HCT116 (cell line): ENCODE measurements at regions of chr7 and their contacts with region 1.

Region 1: GRCh38 chr7:142782922-142783900 is 12.4 kb downstream of the PRSS2 start:
- DNase-seq: peak; percentile 89
- ATAC-seq: peak; percentile 91
- H3K4me3 ChIP-seq: peak overlapping the region; percentile 38 to 51
- H3K27ac ChIP-seq: no peak overlapping the region
- H3K4me1 ChIP-seq: peaks cover 0 to 5% of the 10 kb centered on the region in 2 experiments; a peak in 1 of 4 replicates
- H3K27me3 ChIP-seq: no peaks in the 10 kb centered on the region
- CTCF ChIP-seq: peak; percentile 88 to 100 (median 92)
- POLR2A ChIP-seq: no peak
- RAD21 ChIP-seq: peak; percentile 99

Region 2: GRCh38 chr7:142516038-142516501 is 267.1 kb before region 1 on chr7:
- CTCF ChIA-PET with region 1: interaction called, 10 read pairs
- POLR2A ChIA-PET with region 1: no interaction called
- RAD21 ChIA-PET with region 1: no interaction called
- intact Hi-C with region 1: loop called (anchors 5 kb)
- DNase-seq: peak; percentile 61
- ATAC-seq: peak; percentile 97
- H3K4me3 ChIP-seq: no peak overlapping the region
- H3K27ac ChIP-seq: no peak overlapping the region
- H3K4me1 ChIP-seq: peaks cover 0 to 19% of the 10 kb centered on the region in 2 experiments; a peak in 2 of 4 replicates
- H3K27me3 ChIP-seq: no peaks in the 10 kb centered on the region
- CTCF ChIP-seq: peak; percentile 77 to 89 (median 88)
- POLR2A ChIP-seq: no peak
- RAD21 ChIP-seq: peak; percentile 81

Region 3: DNA sequence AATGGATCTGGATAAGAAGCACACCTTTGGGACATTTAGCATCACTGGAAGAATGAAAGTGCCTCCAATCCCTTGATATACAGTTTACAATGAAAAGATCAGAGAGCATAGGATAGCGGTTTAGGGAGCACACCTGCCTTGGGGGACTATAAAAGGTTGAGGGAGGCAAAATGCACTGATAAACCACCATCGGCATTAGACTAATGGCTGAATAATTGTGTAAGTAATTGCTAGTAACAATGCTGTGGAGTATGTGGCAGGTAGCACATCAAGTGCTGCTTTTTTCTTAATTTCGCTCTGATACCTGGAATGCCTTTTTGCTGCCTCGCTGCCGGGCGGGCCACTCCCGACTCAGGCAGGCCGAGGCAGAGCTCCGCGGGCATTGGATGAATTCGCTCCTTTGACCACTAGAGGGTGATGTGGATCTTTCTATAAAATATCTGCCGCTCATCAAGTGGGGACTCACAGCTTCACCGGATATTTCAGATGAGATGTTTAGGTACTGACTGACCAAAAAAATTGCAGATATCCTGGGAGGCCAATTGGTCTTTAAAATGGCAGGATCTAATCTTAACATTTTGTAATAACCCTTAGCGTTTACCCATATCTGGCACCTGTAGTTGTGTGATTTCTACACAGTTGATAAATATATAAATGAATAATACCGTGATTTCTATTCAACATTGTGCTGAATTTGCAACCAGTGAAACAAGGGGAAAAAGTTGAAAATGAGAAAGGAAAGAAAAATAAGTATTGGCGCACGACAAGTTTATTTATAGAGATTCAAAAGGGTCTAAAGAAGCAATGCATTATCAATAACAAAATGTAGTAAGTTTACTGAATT is 150.7 kb before region 1 on chr7:
- CTCF ChIA-PET with region 1: interaction called, 166 read pairs
- POLR2A ChIA-PET with region 1: interaction called, 3 read pairs
- RAD21 ChIA-PET with region 1: interaction called, 13 to 19 read pairs
- intact Hi-C with region 1: loop called (anchors 1 kb)
- DNase-seq: peak; percentile 63
- ATAC-seq: peak; percentile 98
- H3K4me3 ChIP-seq: no peak overlapping the region
- H3K27ac ChIP-seq: no peak overlapping the region
- H3K4me1 ChIP-seq: peaks cover 0 to 7% of the 10 kb centered on the region in 2 experiments; a peak in 1 of 4 replicates
- H3K27me3 ChIP-seq: peaks cover 6% of the 10 kb centered on the region; the same call in 1 of the 2 replicates
- CTCF ChIP-seq: peak; percentile 71 to 93 (median 81)
- POLR2A ChIP-seq: no peak
- RAD21 ChIP-seq: peak; percentile 82

Region 4: DNA sequence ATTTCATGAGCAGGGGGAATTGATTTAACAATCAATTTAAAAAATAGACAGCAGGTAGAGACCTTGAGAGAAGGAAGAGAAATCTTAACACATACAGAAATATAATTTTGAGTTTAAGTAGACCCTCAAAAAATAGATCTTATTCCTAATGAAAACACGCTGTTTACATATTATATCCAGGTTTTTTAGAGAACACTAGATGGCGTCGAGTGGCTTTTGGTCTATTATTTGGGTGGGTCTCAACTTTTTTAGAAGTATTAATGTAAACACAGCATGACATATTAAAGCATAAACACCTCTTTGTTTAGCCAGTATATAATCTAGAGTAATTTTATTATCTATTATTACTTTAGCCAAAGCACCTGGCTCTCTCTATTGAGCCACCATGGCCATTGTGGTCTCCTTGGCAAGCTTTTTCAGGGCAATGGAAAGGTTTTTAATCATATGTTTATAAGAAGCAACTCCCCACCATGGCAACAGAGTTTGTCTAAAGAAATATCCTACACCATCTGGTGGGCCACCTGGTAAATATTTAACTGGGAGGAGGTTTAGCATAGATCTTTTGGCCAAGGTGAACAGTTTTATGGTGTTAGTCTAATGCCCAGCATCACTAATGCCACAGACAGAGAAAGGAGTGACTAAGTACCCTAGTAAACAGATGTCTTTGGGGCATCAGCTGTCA is 93.6 kb before region 1 on chr7:
- CTCF ChIA-PET with region 1: interaction called, 17 read pairs
- POLR2A ChIA-PET with region 1: no interaction called
- RAD21 ChIA-PET with region 1: no interaction called
- intact Hi-C with region 1: loop called (anchors 1 kb)
- DNase-seq: no peak
- ATAC-seq: no peak
- H3K4me3 ChIP-seq: no peak overlapping the region
- H3K27ac ChIP-seq: no peak overlapping the region
- H3K4me1 ChIP-seq: no peaks in the 10 kb centered on the region
- H3K27me3 ChIP-seq: no peaks in the 10 kb centered on the region
- CTCF ChIP-seq: peak; percentile 23 to 34 (median 33); a peak in 3 of 6 replicates
- POLR2A ChIP-seq: no peak
- RAD21 ChIP-seq: peak; percentile 30; the same call in 1 of the 2 replicates

Region 5: DNA sequence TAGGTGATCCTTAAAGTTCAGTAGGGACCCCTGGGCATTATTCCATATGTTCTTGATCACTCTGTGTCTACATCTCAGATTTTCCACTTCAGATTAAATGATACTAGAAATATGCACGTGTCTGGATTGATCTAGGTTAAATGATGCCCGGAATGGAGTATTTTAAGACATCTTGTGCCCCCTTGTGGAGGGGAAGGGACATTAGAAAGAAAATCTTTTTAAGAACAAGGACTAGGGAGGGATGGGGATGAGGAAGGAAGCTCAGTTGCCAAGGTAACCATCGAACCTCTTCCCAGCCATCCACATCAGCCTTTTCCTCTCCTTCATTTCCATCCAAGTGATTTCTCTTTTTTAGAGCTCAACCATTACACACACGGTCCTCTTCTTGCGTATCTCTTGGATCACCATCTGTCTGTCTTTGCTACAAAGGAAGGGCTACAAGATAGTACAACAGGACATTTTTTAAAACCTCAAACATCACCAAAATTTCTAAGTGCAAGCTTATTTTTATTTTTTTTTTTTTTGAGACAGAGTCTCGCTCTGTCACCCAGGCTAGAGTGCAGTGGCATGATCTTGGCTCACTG is 28.0 kb after region 1 on chr7:
- CTCF ChIA-PET with region 1: interaction called, 27 read pairs
- POLR2A ChIA-PET with region 1: no interaction called
- RAD21 ChIA-PET with region 1: interaction called in 1 of 2 experiments, 5 read pairs
- intact Hi-C with region 1: no loop called
- DNase-seq: peak; percentile 39
- ATAC-seq: peak; percentile 77
- H3K4me3 ChIP-seq: no peak overlapping the region
- H3K27ac ChIP-seq: no peak overlapping the region
- H3K4me1 ChIP-seq: peaks cover 0 to 24% of the 10 kb centered on the region in 2 experiments; a peak in 3 of 4 replicates
- H3K27me3 ChIP-seq: peaks cover 35% of the 10 kb centered on the region; the same call in 1 of the 2 replicates
- CTCF ChIP-seq: peak; percentile 57 to 80 (median 71)
- POLR2A ChIP-seq: no peak
- RAD21 ChIP-seq: peak; percentile 74

Region 6: GRCh38 chr7:143362131-143363015 is 579.2 kb after region 1 on chr7 and contains the start of gene FAM131B:
- CTCF ChIA-PET with region 1: no interaction called
- POLR2A ChIA-PET with region 1: no interaction called
- RAD21 ChIA-PET with region 1: no interaction called
- intact Hi-C with region 1: no loop called
- DNase-seq: no peak
- ATAC-seq: peak; percentile 56
- H3K4me3 ChIP-seq: peak within 1 kb of the TSS; percentile 34 to 53
- H3K27ac ChIP-seq: no peak within 1 kb of the TSS
- H3K4me1 ChIP-seq: peaks cover 0 to 8% of the 10 kb centered on the region in 2 experiments; a peak in 1 of 4 replicates
- H3K27me3 ChIP-seq: no peaks in the 10 kb centered on the region
- CTCF ChIP-seq: no peak
- POLR2A ChIP-seq: no peak
- RAD21 ChIP-seq: no peak
- total RNA-seq, gene FAM131B: 0.20 TPM